Activated T-helper 2 cell treated with anti-CD3 and anti-CD28 coated beads, Interferon-gamma antibody, Interleukin-2, Interleukin-4, amounts not matched to agents 10 μg/mL and 5 μg/mL and 100 μg/mL, durations not matched to agents 14 hours and 24 hours and 36 hours (primary cell): ENCODE measurements at regions of chr10 and their contacts with region 1.

Region 1: DNA sequence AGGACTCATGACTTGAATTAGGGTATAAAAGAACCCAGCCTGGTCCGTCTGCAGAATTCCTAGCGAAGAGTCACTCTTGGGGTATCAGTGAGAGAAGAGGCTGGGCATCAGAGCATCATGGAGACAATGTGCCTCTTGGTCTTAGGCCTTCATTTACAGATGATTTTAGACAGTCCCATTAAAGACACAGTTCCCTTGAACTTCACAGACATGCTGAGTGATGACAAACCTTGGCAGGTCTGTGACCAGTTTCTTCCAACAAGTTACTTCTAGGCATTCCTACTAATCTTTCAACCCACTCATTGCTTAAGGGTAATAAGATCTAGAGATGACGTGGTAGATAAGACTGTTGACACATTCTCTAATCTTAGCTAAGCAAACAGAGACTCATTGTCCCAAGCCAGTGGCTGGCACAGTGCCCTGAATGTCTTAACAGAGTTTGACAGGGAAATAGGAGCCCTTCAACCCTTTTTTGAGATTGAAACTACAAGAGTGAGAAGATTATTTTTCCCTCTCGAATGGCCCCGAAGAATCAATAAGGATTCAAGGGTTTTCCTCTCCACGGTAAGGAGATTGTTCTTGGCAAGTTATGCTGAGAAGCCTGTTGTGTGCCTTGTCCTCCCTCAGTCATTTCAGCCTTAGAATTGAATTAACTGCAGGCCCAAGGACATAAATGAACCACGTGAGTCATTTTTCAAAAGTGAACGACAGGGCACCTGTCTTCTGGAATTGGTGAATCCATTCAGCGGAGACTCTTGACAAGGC is 281.1 kb downstream of the CCDC3 start:
- DNase-seq: no peak
- H3K4me3 Mint-ChIP-seq: no peak overlapping the region
- H3K27ac Mint-ChIP-seq: peak overlapping the region; percentile 53
- H3K4me1 Mint-ChIP-seq: peaks cover 32% of the 10 kb centered on the region
- H3K27me3 Mint-ChIP-seq: no peaks in the 10 kb centered on the region

Region 2: GRCh38 chr10:11236234-11236633 is 1484.2 kb before region 1 on chr10:
- intact Hi-C with region 1: no loop called
- DNase-seq: peak; percentile 47
- H3K4me3 Mint-ChIP-seq: peak overlapping the region; percentile 58
- H3K27ac Mint-ChIP-seq: peak overlapping the region; percentile 98
- H3K4me1 Mint-ChIP-seq: peaks cover 81% of the 10 kb centered on the region
- H3K27me3 Mint-ChIP-seq: no peaks in the 10 kb centered on the region

Region 3: GRCh38 chr10:12757351-12757750 is 37.0 kb after region 1 on chr10:
- intact Hi-C with region 1: no loop called
- DNase-seq: no peak
- H3K4me3 Mint-ChIP-seq: no peak overlapping the region
- H3K27ac Mint-ChIP-seq: no peak overlapping the region
- H3K4me1 Mint-ChIP-seq: no peaks in the 10 kb centered on the region
- H3K27me3 Mint-ChIP-seq: no peaks in the 10 kb centered on the region

Region 4: GRCh38 chr10:12780634-12781601 is 60.5 kb after region 1 on chr10:
- intact Hi-C with region 1: loop called (anchors 2 kb)
- DNase-seq: no peak
- H3K4me3 Mint-ChIP-seq: no peak overlapping the region
- H3K27ac Mint-ChIP-seq: peak overlapping the region; percentile 55
- H3K4me1 Mint-ChIP-seq: peaks cover 38% of the 10 kb centered on the region
- H3K27me3 Mint-ChIP-seq: no peaks in the 10 kb centered on the region